Caco-2 (cell line): ENCODE measurements at regions of chr6 and their contacts with region 1.

Region 1: GRCh38 chr6:97437087-97437486 is 154.1 kb upstream of the MMS22L start:
- DNase-seq: peak in 1 of 2 experiments; percentile 4
- H3K4me3 ChIP-seq: no peak overlapping the region
- H3K4me3 Mint-ChIP-seq: no peak overlapping the region
- H3K27ac Mint-ChIP-seq: no peak overlapping the region
- H3K4me1 ChIP-seq: no peaks in the 10 kb centered on the region
- H3K4me1 Mint-ChIP-seq: peaks cover 5% of the 10 kb centered on the region
- H3K27me3 ChIP-seq: no peaks in the 10 kb centered on the region
- H3K27me3 Mint-ChIP-seq: peaks cover 13% of the 10 kb centered on the region
- CTCF ChIP-seq: peak; percentile 78 to 86

Region 2: GRCh38 chr6:97068211-97068610 is 368.9 kb before region 1 on chr6:
- CTCF ChIA-PET with region 1: no interaction called
- POLR2A ChIA-PET with region 1: no interaction called
- intact Hi-C with region 1: loop called (anchors 5 kb)
- DNase-seq: peak in 1 of 2 experiments; percentile 32
- H3K4me3 ChIP-seq: no peak overlapping the region
- H3K4me3 Mint-ChIP-seq: no peak overlapping the region
- H3K27ac Mint-ChIP-seq: no peak overlapping the region
- H3K4me1 ChIP-seq: no peaks in the 10 kb centered on the region
- H3K4me1 Mint-ChIP-seq: peaks cover 4% of the 10 kb centered on the region
- H3K27me3 ChIP-seq: no peaks in the 10 kb centered on the region
- H3K27me3 Mint-ChIP-seq: no peaks in the 10 kb centered on the region
- CTCF ChIP-seq: peak; percentile 49 to 57

Region 3: GRCh38 chr6:97085772-97086171 is 351.3 kb before region 1 on chr6:
- CTCF ChIA-PET with region 1: no interaction called
- POLR2A ChIA-PET with region 1: no interaction called
- intact Hi-C with region 1: no loop called
- DNase-seq: no peak
- H3K4me3 ChIP-seq: no peak overlapping the region
- H3K4me3 Mint-ChIP-seq: no peak overlapping the region
- H3K27ac Mint-ChIP-seq: no peak overlapping the region
- H3K4me1 ChIP-seq: no peaks in the 10 kb centered on the region
- H3K4me1 Mint-ChIP-seq: peaks cover 7% of the 10 kb centered on the region
- H3K27me3 ChIP-seq: no peaks in the 10 kb centered on the region
- H3K27me3 Mint-ChIP-seq: no peaks in the 10 kb centered on the region
- CTCF ChIP-seq: no peak

Region 4: DNA sequence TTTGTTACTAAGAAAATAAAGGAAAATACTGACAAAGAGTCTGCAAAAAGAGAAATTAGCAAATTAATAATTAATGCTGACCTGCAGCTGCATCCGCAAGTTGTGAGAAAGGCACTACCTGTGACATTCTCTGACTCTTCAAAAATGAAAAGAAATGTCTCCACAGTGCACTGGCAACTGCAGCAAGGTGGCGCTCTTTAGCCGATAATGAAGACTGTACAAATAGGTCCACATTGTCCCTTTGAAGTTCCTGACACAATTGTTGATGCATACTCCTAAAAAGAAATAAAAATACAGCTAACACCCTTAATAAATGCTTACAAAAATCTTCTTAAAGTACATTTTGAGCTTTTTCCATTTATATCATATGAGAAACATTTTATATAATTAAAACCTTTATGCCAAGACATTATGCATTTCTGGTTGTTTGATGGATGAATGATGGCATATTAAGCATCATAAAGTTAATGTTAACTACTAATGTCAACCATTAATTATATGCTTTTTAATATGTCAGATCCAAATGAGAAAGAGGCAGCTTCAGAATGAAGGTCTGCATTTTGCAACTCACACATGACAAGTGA is 250.6 kb before region 1 on chr6:
- CTCF ChIA-PET with region 1: no interaction called
- POLR2A ChIA-PET with region 1: no interaction called
- intact Hi-C with region 1: loop called (anchors 1 kb)
- DNase-seq: peak; percentile 65 to 73
- H3K4me3 ChIP-seq: no peak overlapping the region
- H3K4me3 Mint-ChIP-seq: no peak overlapping the region
- H3K27ac Mint-ChIP-seq: no peak overlapping the region
- H3K4me1 ChIP-seq: no peaks in the 10 kb centered on the region
- H3K4me1 Mint-ChIP-seq: no peaks in the 10 kb centered on the region
- H3K27me3 ChIP-seq: no peaks in the 10 kb centered on the region
- H3K27me3 Mint-ChIP-seq: no peaks in the 10 kb centered on the region
- CTCF ChIP-seq: peak; percentile 77 to 81

Region 5: DNA sequence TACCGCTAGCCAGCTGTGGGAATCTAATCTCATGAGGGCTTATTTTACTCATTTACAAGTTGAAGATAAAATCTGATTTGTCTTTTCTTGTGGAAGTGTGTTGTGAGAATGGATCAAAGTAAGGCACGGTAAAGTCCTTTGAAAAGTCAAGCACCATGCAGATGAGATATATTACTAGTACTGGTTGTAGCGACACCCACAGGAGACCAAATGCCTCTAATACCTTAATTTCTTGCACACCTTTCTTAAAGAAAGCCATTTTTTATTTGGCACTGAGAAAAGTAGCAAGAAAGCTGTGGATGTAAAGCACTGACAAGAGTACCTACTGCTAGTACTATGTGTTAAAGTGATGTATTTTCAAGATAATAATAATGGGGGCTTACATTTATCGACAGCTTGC is 36.9 kb after region 1 on chr6:
- CTCF ChIA-PET with region 1: no interaction called
- POLR2A ChIA-PET with region 1: no interaction called
- intact Hi-C with region 1: loop called (anchors 5 kb)
- DNase-seq: no peak
- H3K4me3 ChIP-seq: no peak overlapping the region
- H3K4me3 Mint-ChIP-seq: no peak overlapping the region
- H3K27ac Mint-ChIP-seq: no peak overlapping the region
- H3K4me1 ChIP-seq: no peaks in the 10 kb centered on the region
- H3K4me1 Mint-ChIP-seq: no peaks in the 10 kb centered on the region
- H3K27me3 ChIP-seq: no peaks in the 10 kb centered on the region
- H3K27me3 Mint-ChIP-seq: peaks cover 5% of the 10 kb centered on the region
- CTCF ChIP-seq: no peak

Region 6: DNA sequence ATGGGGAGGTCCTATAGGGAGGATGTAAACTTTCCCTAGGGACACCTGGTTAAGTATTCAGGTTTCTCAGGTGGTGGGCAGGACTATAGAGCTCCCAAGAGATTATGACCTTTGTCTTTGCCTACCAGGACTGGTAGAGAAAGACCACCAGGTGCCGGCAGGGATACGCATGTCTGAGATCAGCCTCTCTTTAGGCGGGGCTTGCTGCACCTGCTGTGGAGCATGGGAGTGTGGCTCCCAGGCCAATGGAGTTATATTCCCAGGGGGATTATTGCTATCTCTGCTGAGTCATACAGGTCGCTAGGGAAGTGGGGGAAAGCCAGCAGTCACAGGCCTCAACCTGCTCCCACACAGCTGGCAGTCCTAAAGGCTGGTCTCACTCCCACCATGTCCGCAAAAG is 126.4 kb after region 1 on chr6:
- CTCF ChIA-PET with region 1: no interaction called
- POLR2A ChIA-PET with region 1: no interaction called
- intact Hi-C with region 1: no loop called
- DNase-seq: no peak
- H3K4me3 ChIP-seq: no peak overlapping the region
- H3K4me3 Mint-ChIP-seq: no peak overlapping the region
- H3K27ac Mint-ChIP-seq: no peak overlapping the region
- H3K4me1 ChIP-seq: no peaks in the 10 kb centered on the region
- H3K4me1 Mint-ChIP-seq: no peaks in the 10 kb centered on the region
- H3K27me3 ChIP-seq: no peaks in the 10 kb centered on the region
- H3K27me3 Mint-ChIP-seq: peaks cover 3% of the 10 kb centered on the region
- CTCF ChIP-seq: no peak